Calu3 (cell line): ENCODE measurements at regions of chr19 and their contacts with region 1.

Region 1: DNA sequence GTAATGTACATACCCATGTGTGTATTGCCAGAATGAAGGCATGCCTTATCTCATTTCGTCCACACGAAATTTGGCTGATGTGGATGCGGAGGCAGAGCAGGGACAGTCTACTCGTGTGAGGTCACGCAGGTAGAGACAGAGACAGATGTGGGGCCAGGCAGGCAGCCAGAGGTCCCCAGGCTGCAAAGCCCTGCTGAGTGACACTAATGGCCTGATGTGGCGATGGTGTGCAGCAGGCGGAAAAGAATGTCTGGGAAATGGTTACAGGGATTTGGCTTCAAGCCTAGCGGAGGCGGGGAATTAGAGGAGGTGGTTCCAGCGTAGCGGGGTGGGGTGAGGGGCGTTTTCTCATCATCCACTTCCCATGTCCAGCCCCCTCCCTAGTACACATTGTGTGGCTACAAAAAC is 4.2 kb upstream of the IZUMO2 start:
- DNase-seq: peak; percentile 42
- H3K4me3 Mint-ChIP-seq: no peak overlapping the region
- H3K27ac Mint-ChIP-seq: no peak overlapping the region
- H3K4me1 Mint-ChIP-seq: peaks cover 28% of the 10 kb centered on the region
- H3K27me3 Mint-ChIP-seq: peaks cover 18% of the 10 kb centered on the region
- CTCF ChIP-seq: no peak

Region 2: GRCh38 chr19:49973987-49974386 is 193.3 kb before region 1 on chr19:
- CTCF ChIA-PET with region 1: no interaction called
- intact Hi-C with region 1: no loop called
- DNase-seq: no peak
- H3K4me3 Mint-ChIP-seq: no peak overlapping the region
- H3K27ac Mint-ChIP-seq: no peak overlapping the region
- H3K4me1 Mint-ChIP-seq: no peaks in the 10 kb centered on the region
- H3K27me3 Mint-ChIP-seq: peaks cover 3% of the 10 kb centered on the region
- CTCF ChIP-seq: no peak

Region 3: DNA sequence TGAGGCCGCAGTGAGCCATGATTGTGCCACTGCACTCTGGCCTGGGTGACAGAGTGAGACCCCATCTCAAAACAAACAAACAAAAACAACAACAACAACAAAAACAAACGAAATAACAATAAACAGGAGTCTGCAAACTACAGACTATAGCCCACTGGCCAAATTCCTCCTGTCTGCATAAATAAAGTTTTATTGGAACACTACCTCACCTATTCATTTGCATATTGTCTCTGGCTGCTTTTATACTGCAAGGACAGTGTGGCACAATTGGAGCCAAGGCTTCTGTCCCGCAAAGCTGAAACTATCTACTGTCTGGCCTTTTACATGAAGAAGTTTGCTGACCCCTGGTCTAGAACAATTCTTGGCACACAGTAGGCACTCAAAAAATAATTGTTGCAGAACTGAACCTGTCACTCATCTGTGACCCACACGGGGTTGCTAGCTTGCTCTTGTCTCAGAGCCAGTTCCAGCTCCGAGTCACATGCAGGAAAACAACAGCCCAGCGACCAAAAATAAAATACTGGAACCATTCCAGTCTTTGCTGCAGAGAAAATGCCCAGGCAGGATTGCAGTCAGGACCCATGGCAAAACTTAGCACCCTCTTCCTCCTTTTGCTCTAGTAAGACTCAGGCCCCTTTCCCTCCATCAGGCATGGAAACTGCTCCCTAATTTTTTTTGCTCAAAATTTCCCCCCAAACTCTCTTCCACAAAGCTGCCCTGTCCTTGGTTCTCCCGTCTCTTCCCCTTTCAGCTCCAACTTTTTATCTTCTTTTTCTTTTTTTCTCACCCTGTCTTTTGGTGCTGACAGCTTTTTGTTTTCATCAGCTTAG is 31.3 kb after region 1 on chr19:
- CTCF ChIA-PET with region 1: no interaction called
- intact Hi-C with region 1: no loop called
- DNase-seq: no peak
- H3K4me3 Mint-ChIP-seq: no peak overlapping the region
- H3K27ac Mint-ChIP-seq: no peak overlapping the region
- H3K4me1 Mint-ChIP-seq: peaks cover 28% of the 10 kb centered on the region
- H3K27me3 Mint-ChIP-seq: peaks cover 28% of the 10 kb centered on the region
- CTCF ChIP-seq: no peak

Region 4: DNA sequence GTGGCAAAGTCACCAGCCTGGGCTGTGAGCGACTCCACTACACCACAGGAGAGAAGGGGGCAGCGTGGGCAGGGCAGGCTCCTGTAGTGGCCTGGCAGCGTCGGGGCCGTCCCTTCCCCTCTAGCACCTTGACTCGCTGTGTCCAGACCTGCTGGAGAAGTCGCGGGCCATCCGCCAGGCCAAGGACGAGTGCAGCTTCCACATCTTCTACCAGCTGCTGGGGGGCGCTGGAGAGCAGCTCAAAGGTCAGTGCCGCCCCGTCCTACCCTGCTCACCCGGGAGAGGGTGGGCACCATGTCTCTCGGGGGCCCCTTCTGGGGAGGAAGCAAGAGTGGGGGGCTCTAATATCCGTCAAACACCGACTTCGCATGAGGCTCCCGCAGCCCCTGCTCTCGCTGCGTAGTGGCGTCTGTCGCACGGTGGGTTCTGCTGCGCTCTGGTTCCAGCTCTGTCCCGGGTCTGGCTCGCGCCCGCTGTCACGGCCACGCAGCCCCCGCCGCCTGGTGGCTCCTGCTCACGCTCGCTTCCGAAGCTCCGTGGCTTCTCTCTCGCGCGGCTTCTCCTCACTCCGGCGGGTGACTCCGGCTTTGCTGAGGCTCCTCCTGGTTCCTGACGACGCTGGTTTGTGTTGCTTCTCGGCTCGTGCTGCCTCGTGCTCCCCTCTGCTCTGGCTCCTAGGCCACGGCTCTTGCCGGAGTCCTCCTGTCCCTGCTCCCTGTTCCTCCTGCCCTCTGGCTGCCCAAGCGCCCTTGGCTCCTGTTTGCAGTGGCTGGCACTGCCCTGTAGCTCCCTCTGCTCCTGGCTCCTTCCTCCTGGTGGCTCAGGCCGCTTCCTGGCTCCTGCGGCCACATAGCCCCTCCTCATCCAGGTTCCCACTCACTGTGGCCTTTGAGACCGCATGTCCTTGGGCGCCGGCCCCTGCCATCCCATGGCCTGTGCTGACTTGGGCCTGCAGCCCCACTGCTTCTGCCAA is 63.3 kb after region 1 on chr19:
- CTCF ChIA-PET with region 1: no interaction called
- intact Hi-C with region 1: no loop called
- DNase-seq: no peak
- H3K4me3 Mint-ChIP-seq: peak overlapping the region; percentile 3
- H3K27ac Mint-ChIP-seq: no peak overlapping the region
- H3K4me1 Mint-ChIP-seq: no peaks in the 10 kb centered on the region
- H3K27me3 Mint-ChIP-seq: no peaks in the 10 kb centered on the region
- CTCF ChIP-seq: no peak

Region 5: GRCh38 chr19:50258918-50259372 is 91.6 kb after region 1 on chr19:
- CTCF ChIA-PET with region 1: interaction called, 4 read pairs
- intact Hi-C with region 1: loop called (anchors 5 kb)
- DNase-seq: peak; percentile 70
- H3K4me3 Mint-ChIP-seq: no peak overlapping the region
- H3K27ac Mint-ChIP-seq: no peak overlapping the region
- H3K4me1 Mint-ChIP-seq: no peaks in the 10 kb centered on the region
- H3K27me3 Mint-ChIP-seq: no peaks in the 10 kb centered on the region
- CTCF ChIP-seq: peak; percentile 82